HEK293 (cell line): ENCODE measurements at regions of chr16 and their contacts with region 1.

Region 1: DNA sequence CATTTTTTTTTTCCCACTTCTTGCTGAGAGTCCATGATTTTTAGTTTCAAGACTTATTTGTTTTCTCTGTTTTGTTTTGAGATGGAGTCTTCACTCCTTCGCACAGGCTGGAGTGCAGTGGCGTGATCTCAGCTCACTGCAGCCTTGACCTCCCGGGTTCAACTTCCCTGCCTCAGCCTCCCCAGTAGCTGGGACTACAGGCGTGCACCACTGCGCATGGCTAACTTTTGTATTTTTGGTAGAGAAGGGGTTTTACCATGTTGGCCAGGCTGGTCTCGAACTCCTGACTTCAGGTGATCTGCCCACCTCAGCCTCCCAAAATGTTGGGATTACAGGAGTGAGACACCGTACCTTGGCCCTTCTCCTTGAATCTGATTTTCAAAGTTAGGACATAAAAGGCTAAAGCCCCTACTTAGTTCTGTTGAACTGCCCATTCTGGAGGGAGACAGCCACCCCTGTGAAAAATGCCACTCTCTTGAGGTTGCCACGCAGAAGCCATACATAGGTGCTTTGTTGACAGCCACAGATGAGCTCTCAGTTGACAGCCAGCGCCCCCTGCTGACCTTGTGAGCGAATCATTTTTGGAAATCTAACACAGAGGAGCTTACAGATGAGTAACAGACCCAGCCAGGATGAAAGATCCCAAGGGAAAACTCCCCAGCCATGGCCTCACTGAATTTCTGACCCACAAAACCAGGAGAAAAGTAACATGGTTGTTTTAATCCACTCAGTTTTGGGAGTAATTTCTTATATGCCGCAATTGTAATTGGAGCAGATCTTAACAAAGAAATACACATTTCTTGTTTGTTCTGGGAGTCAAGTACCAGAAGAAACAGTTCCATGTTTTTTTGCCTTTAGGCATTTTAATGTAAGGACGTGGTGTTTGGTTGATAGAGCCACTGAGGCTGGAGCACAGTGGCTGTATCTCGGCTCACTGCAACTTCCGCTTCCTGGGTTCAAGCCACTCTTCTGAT is 38.8 kb downstream of the PKD1L3 start:
- H3K4me3 ChIP-seq: no peak overlapping the region
- H3K27ac ChIP-seq: no peak overlapping the region
- H3K4me1 ChIP-seq: no peaks in the 10 kb centered on the region
- CTCF ChIP-seq: peak; percentile 74; the same call in 1 of the 2 replicates

Region 2: GRCh38 chr16:71929048-71929447 is 32.3 kb before region 1 on chr16:
- CTCF ChIA-PET with region 1: interaction called, 17 read pairs
- POLR2A ChIA-PET with region 1: no interaction called
- H3K4me3 ChIP-seq: no peak overlapping the region
- H3K27ac ChIP-seq: no peak overlapping the region
- H3K4me1 ChIP-seq: peaks cover 20% of the 10 kb centered on the region; the same call in 1 of the 2 replicates
- CTCF ChIP-seq: no peak

Region 3: DNA sequence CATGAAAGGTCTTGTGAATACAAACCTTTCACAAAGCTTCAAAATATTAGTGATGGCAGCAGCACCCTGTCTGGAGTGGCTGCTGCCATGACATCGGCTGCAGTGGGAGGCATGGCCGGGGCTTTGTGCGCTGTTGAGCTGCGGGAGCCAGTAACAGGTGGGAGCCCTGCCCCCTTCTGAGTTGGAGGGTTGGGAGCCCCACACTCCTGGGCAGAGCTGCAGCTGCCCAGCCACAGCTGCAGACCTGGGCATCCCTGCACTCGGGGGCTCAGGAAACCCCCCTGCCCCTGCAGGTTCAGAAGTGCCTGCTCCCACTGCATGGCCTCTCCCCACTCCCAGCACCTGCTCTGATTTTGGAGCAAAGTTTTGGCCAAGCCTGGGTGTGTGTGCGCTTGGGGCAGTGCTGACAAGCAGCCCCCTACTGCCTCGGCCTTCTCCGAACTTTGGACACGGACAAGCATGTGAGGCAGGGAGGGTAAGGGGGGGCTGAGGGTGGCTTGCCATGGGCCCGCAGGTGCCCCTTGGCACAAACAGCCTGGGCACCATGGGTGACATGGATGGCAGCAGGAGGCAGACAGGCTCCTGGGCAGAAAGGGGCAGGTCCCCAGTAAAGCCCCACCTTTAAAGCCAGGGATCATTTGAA is 23.4 kb before region 1 on chr16:
- CTCF ChIA-PET with region 1: interaction called, 12 read pairs
- POLR2A ChIA-PET with region 1: no interaction called
- H3K4me3 ChIP-seq: no peak overlapping the region
- H3K27ac ChIP-seq: no peak overlapping the region
- H3K4me1 ChIP-seq: no peaks in the 10 kb centered on the region
- CTCF ChIP-seq: no peak